ENCODE measurements at regions of chr1 and their contacts with region 1.

Region 1: DNA sequence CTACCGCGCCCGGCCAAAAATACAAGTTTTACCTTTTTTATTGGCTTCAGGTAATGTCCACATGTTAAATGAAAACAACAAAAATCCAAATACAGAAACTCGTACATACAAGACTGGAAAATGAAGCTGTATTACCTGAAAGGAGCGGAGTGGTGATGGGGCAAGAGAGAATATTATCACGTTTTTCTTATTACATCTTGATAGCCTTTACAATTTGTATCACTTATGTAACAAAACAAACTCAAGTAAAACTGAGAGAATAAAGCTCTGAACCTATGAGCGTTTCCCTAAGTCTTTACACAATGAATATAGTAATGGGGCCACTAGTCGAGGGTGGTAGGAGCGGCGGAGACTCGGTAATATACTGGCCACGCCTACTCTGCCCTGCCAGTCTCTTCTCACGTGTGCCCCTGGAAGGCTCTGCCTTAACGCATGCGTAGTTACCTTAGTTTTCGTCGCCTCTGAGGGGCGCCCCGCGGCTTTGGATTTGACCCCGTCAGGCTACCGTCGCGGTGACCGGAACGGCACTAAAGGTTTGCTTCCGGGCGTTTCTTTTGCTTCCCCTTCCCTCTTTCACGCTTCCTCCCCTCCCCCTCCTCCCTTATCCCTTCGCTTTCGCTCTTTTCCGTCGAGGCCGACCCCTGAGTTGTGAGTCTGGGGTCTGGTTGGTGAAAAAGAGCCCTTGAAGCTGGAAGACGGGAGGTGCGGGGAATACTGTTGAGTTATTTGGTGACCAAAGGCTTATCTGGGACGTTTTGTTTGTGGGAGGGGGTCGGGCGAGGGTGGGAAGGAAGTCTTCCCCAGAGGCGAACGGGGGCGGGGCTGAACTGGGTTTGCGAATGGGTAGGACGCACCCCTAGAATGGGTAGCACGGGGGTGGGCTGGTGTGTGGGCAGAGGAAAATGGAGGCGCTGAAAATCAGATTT is at the start of gene SETDB1:
- DNase-seq: peak; percentile 97
- ATAC-seq: peak; percentile 98
- H3K4me3 ChIP-seq: peak within 1 kb of the TSS; percentile 81 to 96 (median 82)
- H3K27ac ChIP-seq: peak within 1 kb of the TSS; percentile 95
- H3K4me1 ChIP-seq: peaks cover 15% of the 10 kb centered on the region
- H3K27me3 ChIP-seq: no peaks in the 10 kb centered on the region
- CTCF ChIP-seq: peak; percentile 68
- EP300 ChIP-seq: peak in 1 of 2 experiments; percentile 44; a peak in 1 of 4 replicates
- POLR2A ChIP-seq: peak; percentile 47 to 70; a peak in 3 of 4 replicates
- RAD21 ChIP-seq: no peak
- total RNA-seq, gene SETDB1: 31.0 and 34.6 TPM in 2 replicates

Region 2: GRCh38 chr1:150829743-150830142 is 96.3 kb before region 1 on chr1:
- CTCF ChIA-PET with region 1: interaction called, 4 read pairs
- POLR2A ChIA-PET with region 1: no interaction called
- in situ Hi-C with region 1: no loop called
- intact Hi-C with region 1: loop called (anchors 10 kb)
- DNase-seq: no peak
- ATAC-seq: no peak
- H3K4me3 ChIP-seq: no peak overlapping the region
- H3K27ac ChIP-seq: no peak overlapping the region
- H3K4me1 ChIP-seq: no peaks in the 10 kb centered on the region
- H3K27me3 ChIP-seq: no peaks in the 10 kb centered on the region
- CTCF ChIP-seq: 0 out of 2 replicates have a peak, but pooled peaks have one; percentile 6
- EP300 ChIP-seq: no peak
- POLR2A ChIP-seq: no peak
- RAD21 ChIP-seq: no peak

Region 3: DNA sequence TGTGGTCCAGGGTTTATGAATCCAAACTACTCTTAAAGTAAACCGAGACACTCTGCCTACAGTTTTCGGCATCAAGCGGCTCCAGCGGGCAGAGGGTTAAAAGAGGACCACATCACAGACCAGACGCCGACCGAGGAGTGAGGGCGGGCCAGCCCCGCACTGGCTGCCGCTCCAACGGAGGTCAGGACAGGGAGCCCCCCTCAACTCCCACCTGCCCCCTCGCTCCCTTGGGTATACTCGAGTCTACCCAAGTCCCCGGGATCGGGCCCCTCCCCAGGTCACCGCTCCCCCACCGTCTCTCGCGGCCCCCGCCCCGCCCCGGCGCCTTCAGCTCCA is 50.0 kb before region 1 on chr1:
- CTCF ChIA-PET with region 1: no interaction called
- POLR2A ChIA-PET with region 1: interaction called, 3 read pairs
- in situ Hi-C with region 1: no loop called
- intact Hi-C with region 1: loop called (anchors 5 kb)
- DNase-seq: peak; percentile 63
- ATAC-seq: peak; percentile 80
- H3K4me3 ChIP-seq: peak overlapping the region; percentile 84 to 90 (median 85)
- H3K27ac ChIP-seq: peak overlapping the region; percentile 84
- H3K4me1 ChIP-seq: peaks cover 33% of the 10 kb centered on the region
- H3K27me3 ChIP-seq: no peaks in the 10 kb centered on the region; a peak in 1 of 5 replicates
- CTCF ChIP-seq: no peak
- EP300 ChIP-seq: no peak
- POLR2A ChIP-seq: no peak
- RAD21 ChIP-seq: no peak

Region 4: GRCh38 chr1:150944856-150945255 is 18.8 kb after region 1 on chr1:
- CTCF ChIA-PET with region 1: no interaction called
- POLR2A ChIA-PET with region 1: no interaction called
- in situ Hi-C with region 1: no loop called
- intact Hi-C with region 1: no loop called
- DNase-seq: no peak
- ATAC-seq: no peak
- H3K4me3 ChIP-seq: no peak overlapping the region
- H3K27ac ChIP-seq: no peak overlapping the region
- H3K4me1 ChIP-seq: no peaks in the 10 kb centered on the region
- H3K27me3 ChIP-seq: no peaks in the 10 kb centered on the region
- CTCF ChIP-seq: no peak
- EP300 ChIP-seq: no peak
- POLR2A ChIP-seq: no peak
- RAD21 ChIP-seq: no peak